Right ventricle myocardium inferior (tissue), 1 donor: ENCODE measurements at regions of chr12 and their contacts with region 1.

Region 1: DNA sequence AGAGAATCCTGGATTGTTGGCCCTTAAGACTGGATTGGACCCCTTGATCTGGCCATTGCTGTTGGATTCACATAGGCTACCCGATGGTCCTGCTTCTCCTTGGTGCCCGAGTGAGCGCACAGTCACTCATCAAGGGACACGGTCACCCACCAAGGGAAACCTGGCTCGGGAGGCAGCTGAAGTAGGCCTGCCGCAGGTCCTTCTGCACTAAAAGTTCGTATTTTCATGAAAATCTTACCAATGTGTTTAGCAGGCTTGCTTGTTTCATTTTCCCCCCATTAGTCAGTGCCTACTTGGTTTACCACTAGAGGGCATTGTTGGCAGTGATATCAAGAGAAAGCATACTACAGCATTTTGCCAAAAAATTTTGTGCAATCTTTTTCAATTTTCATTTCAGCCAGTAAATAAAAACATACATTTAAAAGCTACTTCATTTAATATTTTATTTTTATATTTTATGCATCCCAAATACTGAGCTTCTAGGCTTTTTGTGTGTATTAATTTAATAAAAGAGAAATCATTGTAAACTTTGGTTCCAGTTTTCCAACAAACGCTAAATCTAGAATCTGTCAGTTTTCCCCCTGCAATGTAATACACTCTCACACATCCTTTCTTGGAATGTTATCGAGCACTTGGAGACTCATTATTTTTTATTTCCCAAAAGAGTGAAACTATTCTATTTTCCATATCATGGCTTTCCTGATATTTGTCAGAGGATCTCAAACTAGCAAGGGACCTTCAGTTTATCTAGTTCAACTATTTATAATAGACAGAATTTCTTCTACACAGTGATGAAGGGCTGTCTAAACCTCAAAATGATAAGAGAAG is 116.7 kb downstream of the LMNTD1 start:
- DNase-seq: no peak
- ATAC-seq: no peak

Region 2: DNA sequence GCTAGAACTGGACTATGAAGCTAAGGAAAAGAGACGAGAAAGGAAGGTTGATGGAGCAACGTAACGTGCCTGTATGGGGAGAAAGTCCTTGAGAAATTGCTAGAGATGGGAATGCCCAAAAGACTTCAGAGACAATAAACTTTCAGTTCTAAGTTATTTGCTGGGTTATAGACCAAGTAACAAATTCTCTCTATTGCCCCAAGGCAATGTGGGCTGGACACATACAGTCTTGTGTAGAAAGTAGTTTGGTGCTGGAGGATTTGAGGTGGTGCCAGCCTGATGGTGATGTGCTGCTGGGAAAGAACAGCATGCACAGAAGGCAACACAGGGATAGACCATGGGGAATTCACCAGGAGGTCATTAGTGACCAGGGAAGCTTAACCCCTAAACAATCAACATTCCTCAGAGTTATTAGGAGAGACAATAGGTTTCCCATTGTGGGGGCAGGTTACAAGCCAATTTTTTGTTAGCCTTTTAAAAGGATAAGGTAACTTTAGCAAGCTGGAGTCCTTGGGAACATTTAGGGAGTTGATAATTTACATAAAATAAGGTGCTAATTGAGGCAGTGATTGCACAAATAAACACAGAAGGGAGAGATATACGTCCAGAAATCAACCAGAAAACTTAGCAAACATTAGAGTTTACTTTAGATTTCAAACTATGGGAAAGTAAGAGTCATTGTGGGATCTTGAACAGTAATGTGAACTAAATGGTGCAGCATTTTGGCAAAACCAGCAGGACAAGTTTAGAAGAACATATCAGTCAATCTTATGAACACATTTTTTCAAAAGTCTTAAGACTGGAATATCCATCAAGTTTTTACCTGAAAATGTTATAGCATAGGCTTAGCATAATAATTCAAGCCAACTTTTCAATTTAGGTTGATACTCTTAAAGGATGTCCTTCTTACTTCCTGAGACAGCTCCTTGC is 55.2 kb after region 1 on chr12:
- intact Hi-C with region 1: no loop called
- DNase-seq: no peak
- ATAC-seq: no peak

Region 3: DNA sequence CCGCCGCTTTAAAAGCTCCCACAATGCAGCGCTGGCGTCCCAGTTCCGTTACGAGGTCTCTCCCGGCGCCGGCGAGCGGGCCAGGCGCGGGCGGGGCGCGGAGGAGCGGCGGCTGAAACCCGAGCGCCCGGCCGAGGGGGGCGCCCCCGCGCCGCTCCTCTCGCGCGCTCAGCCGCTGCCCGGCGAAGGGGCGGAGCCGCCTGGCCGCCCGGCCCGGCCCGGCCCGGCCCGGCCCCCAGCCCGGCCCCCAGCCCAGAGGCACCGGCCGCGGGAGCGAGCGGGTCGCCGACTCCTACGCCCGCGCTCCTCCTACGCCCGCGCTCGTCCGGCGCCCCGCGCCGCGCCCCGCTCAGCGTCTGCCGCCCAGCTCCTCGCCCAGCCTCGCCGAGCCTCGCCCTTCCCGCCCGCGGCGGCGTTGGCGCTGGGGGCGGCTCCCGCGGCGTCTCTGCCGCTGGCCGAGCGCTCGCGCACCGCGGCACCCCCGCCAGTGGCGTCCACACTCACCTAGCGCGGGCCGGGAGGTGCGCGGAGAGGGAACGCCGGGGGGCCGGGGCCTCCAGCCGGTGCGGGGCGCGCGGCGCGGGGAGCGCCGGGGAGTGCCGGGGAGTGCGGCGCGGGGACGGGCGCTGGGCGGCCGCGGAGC is 522.1 kb after region 1 on chr12 and contains the start of gene RASSF8:
- intact Hi-C with region 1: loop called (anchors 5 kb)
- DNase-seq: peak; percentile 87
- ATAC-seq: peak; percentile 96
- total RNA-seq, gene RASSF8: 26.2 TPM

Region 4: DNA sequence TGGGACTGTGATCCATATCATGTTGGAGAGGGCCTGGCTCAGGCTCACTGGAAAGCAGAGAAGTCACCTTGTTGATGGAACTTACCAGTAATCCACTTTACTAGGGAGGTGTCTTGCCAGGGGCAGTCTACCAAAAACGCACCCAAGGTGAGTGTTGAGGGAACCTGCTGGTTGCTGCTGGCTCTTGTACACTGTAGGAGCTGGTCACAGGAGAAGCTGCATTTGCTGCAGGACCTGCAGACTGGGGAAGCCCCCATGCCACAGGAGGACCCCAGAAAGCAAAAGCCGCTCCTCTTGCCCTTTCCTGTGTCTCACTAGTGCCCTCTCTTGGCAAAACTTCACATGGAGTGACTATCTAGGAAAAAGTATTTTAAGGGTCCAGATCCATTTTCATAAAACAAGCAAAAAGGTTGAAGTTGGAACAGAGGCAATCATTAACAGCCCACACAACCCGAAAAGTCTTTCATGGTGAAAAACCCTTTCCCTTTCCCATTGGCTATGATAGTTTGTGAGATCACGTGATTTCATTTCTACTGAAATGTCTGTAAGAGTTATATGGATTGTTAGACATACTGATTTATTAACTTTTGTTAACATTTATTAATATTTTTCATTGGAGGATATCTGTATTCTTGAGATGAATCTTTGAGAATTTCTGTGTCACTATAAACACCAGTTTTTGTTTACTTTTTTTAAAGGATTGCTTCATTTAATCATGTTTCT is 581.2 kb after region 1 on chr12:
- intact Hi-C with region 1: loop called (anchors 5 kb)
- DNase-seq: no peak
- ATAC-seq: peak; percentile 28

Region 5: GRCh38 chr12:26028953-26029735 is 592.7 kb after region 1 on chr12:
- intact Hi-C with region 1: loop called (anchors 2 kb)
- DNase-seq: no peak
- ATAC-seq: peak; percentile 60